ENCODE measurements at regions of chr12 and their contacts with region 1.

Region 1: DNA sequence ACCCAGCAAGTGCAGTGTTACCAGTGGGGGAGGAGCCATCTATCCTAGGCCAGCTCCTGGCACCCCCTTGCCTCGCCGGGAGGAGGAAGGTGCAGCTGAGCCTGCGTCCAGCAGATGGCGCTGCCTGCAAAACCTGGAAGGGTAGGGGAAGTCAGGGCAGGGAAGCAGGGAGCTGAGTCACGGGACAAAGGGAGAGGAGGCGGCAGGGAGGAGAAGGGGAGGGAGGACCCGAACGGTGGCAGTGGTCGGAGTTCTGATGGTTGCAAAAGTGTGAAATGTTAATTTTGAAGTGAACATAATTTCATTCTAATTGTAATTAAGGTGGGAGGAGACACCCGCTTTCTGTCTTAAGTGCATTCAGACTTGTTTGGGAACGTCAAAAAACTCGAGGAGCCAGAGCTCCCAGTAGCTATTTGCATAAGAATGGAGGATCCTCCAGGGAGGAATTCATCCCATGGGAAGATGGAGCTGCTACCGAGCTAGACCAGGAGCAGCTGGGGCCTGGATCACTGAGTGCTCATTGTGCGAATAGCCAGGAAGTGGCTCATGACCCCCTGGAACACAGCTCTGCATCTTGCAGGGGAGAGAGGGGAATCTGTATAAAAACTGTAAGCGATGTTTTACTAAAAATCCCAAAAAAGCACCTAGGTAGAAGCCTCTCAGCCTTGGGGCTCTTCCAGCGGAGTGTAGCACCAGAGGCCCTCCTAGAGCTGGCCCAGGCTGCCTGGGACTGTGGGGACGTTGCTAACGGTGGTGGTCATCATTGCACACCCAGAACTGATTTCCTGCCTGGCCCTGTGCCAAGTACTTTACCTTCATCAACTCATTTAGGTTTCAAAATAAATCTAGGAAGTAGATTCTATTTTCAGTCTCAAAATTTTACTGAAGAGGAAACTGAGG is 59.5 kb downstream of the EMP1 start:
- DNase-seq: peak; percentile 48 to 79 (median 73)
- ATAC-seq: peak; percentile 97
- H3K4me3 ChIP-seq: no peak overlapping the region
- H3K4me3 Mint-ChIP-seq: no peak overlapping the region
- H3K27ac ChIP-seq: no peak overlapping the region
- H3K27ac Mint-ChIP-seq: no peak overlapping the region
- H3K4me1 ChIP-seq: no peaks in the 10 kb centered on the region
- H3K4me1 Mint-ChIP-seq: peaks cover 3% of the 10 kb centered on the region
- H3K27me3 ChIP-seq: no peaks in the 10 kb centered on the region
- H3K27me3 Mint-ChIP-seq: peaks cover 6% of the 10 kb centered on the region
- CTCF ChIP-seq: peak; percentile 96

Region 2: DNA sequence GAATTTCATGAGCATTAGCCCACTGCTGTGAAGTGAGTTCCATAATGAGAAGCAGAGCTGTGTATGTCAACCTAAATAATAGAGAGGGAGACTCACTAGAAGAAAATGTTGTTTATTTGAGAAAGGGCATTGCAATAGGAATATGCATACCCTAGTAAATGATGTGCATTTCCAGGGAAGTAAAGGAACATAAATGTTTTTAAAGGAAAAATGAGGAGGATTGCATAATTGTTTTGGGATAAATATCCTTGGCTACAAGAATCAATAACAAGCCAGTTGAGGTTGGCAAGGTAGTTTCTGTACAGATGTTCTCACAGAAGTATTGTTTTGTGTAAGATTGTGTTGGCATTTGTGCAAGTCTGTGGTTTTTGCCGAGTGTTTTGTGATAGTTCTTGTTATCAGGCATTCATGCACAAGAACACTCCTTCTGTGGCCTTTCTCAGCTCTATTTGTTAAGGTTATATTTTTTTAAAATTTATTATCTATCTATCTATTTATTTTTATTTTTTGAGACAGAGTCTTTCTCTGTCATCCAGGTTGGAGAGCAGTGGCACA is 12.4 kb before region 1 on chr12:
- CTCF ChIA-PET with region 1: interaction called, 13 read pairs
- POLR2A ChIA-PET with region 1: no interaction called
- intact Hi-C with region 1: no loop called
- DNase-seq: no peak
- ATAC-seq: no peak
- H3K4me3 ChIP-seq: no peak overlapping the region
- H3K4me3 Mint-ChIP-seq: no peak overlapping the region
- H3K27ac ChIP-seq: no peak overlapping the region
- H3K27ac Mint-ChIP-seq: no peak overlapping the region
- H3K4me1 ChIP-seq: no peaks in the 10 kb centered on the region
- H3K4me1 Mint-ChIP-seq: no peaks in the 10 kb centered on the region
- H3K27me3 ChIP-seq: no peaks in the 10 kb centered on the region
- H3K27me3 Mint-ChIP-seq: peaks cover 8% of the 10 kb centered on the region
- CTCF ChIP-seq: no peak

Region 3: GRCh38 chr12:13270817-13271216 is 14.8 kb after region 1 on chr12:
- CTCF ChIA-PET with region 1: interaction called, 29 read pairs
- POLR2A ChIA-PET with region 1: no interaction called
- intact Hi-C with region 1: no loop called
- DNase-seq: no peak
- ATAC-seq: no peak
- H3K4me3 ChIP-seq: no peak overlapping the region
- H3K4me3 Mint-ChIP-seq: no peak overlapping the region
- H3K27ac ChIP-seq: no peak overlapping the region
- H3K27ac Mint-ChIP-seq: no peak overlapping the region
- H3K4me1 ChIP-seq: no peaks in the 10 kb centered on the region
- H3K4me1 Mint-ChIP-seq: no peaks in the 10 kb centered on the region
- H3K27me3 ChIP-seq: peaks cover 0 to 3% of the 10 kb centered on the region in 2 experiments
- H3K27me3 Mint-ChIP-seq: peaks cover 18% of the 10 kb centered on the region
- CTCF ChIP-seq: no peak

Region 4: GRCh38 chr12:13278249-13278787 is 22.3 kb after region 1 on chr12:
- CTCF ChIA-PET with region 1: interaction called, 29 read pairs
- POLR2A ChIA-PET with region 1: no interaction called
- intact Hi-C with region 1: no loop called
- DNase-seq: peak; percentile 13 to 73 (median 61)
- ATAC-seq: peak; percentile 64
- H3K4me3 ChIP-seq: no peak overlapping the region
- H3K4me3 Mint-ChIP-seq: no peak overlapping the region
- H3K27ac ChIP-seq: no peak overlapping the region
- H3K27ac Mint-ChIP-seq: no peak overlapping the region
- H3K4me1 ChIP-seq: no peaks in the 10 kb centered on the region
- H3K4me1 Mint-ChIP-seq: peaks cover 6% of the 10 kb centered on the region
- H3K27me3 ChIP-seq: peaks cover 0 to 6% of the 10 kb centered on the region in 2 experiments
- H3K27me3 Mint-ChIP-seq: peaks cover 44% of the 10 kb centered on the region
- CTCF ChIP-seq: peak; percentile 93

Region 5: GRCh38 chr12:14167005-14167628 is 911.1 kb after region 1 on chr12:
- CTCF ChIA-PET with region 1: interaction called, 6 read pairs
- POLR2A ChIA-PET with region 1: no interaction called
- intact Hi-C with region 1: loop called in 1 of 2 experiments (anchors 5 kb)
- DNase-seq: peak in 7 of 9 experiments; percentile 4 to 55 (median 42)
- ATAC-seq: peak; percentile 48
- H3K4me3 ChIP-seq: no peak overlapping the region
- H3K4me3 Mint-ChIP-seq: no peak overlapping the region
- H3K27ac ChIP-seq: no peak overlapping the region
- H3K27ac Mint-ChIP-seq: no peak overlapping the region
- H3K4me1 ChIP-seq: no peaks in the 10 kb centered on the region
- H3K4me1 Mint-ChIP-seq: peaks cover 3% of the 10 kb centered on the region
- H3K27me3 ChIP-seq: no peaks in the 10 kb centered on the region
- H3K27me3 Mint-ChIP-seq: peaks cover 5% of the 10 kb centered on the region
- CTCF ChIP-seq: peak; percentile 91